Vagina (tissue), 2 donors: ENCODE measurements at regions of chr7 and their contacts with region 1.

Region 1: DNA sequence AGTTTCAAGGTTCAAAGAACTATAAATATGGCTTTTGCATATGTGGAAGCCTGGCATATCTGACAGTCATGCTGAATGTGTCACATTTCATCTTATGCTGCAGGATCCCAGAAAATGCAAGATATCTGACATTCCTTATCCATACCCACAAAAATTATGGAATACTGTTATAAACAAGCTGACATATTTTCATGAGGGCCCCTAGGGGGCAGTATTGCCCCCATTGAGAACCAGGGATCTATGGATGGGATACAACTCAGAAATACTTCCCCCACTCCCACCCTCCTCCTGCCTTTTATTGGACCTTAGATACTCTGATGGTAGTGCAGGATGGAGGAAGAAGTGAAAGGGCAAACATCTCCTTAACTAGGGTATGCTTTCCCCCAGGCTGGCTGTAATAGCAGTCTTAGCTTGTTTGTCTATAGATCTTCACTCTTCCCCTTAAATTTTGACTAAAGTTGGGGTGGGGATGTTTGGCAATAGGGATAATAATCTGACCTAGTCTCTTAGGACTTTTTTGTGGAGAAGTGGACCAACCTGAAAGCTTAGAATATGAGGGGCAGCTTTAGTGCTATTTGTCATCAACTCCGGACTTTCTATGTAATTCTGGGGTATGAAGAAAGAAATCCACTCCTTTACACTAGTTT is 3.5 kb upstream of the GNGT1 start:
- DNase-seq: no peak
- H3K4me3 ChIP-seq: no peak overlapping the region
- H3K27ac ChIP-seq: no peak overlapping the region
- H3K4me1 ChIP-seq: no peaks in the 10 kb centered on the region
- H3K27me3 ChIP-seq: no peaks in the 10 kb centered on the region
- CTCF ChIP-seq: peak in 2 of 3 experiments; percentile 24 to 52
- POLR2A ChIP-seq: no peak

Region 2: DNA sequence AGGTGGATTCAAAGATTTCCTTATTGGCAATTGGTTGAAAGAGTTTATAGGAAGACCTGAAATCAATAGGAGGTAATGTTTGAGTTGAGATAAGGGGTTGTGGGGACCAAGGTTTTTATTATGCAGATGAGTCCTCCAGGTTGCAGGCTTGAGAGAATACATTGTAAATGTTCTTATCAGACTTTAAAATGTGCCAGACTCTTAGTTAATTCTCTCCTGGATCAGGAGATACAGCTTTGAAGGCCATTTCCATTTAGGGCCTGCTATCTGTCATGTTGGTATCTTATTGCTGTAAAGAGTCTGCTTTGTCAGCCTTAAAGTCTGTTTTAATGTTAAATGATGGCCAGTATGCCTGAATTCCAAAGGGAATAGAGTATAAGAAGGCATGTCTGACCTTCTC is 266.6 kb before region 1 on chr7:
- intact Hi-C with region 1: no loop called
- DNase-seq: no peak
- H3K4me3 ChIP-seq: no peak overlapping the region
- H3K27ac ChIP-seq: no peak overlapping the region
- H3K4me1 ChIP-seq: no peaks in the 10 kb centered on the region
- H3K27me3 ChIP-seq: no peaks in the 10 kb centered on the region
- CTCF ChIP-seq: no peak
- POLR2A ChIP-seq: no peak

Region 3: DNA sequence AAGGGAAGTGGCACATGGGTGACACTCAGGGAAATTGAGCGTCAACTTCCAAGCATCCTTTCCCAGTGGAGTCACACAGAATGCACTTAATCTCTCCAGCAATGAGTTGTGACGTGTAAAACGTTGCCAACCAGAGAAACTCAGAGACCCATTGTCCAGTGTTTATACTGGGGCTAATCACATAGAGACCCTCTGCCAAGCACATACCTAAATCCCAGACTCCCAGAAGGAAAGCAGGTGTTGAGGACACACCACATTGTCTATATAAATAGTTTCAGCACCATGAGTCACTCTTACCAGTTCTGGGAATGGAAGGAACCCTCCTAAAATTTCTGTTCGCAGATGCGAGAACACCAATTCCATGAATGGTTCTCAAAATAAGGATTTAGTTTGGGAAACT is 177.7 kb after region 1 on chr7:
- intact Hi-C with region 1: loop called (anchors 5 kb)
- DNase-seq: no peak
- H3K4me3 ChIP-seq: no peak overlapping the region
- H3K27ac ChIP-seq: no peak overlapping the region
- H3K4me1 ChIP-seq: no peaks in the 10 kb centered on the region
- H3K27me3 ChIP-seq: no peaks in the 10 kb centered on the region
- CTCF ChIP-seq: no peak
- POLR2A ChIP-seq: no peak